ENCODE measurements at regions of chr18 and their contacts with region 1.

Region 1: GRCh38 chr18:29326214-29326613 is 1149.3 kb upstream of the CDH2 start:
- DNase-seq: no peak
- ATAC-seq: no peak
- H3K4me3 ChIP-seq: no peak overlapping the region
- H3K27ac ChIP-seq: no peak overlapping the region
- H3K4me1 ChIP-seq: peaks cover 13% of the 10 kb centered on the region
- H3K27me3 ChIP-seq: no peaks in the 10 kb centered on the region
- CTCF ChIP-seq: no peak

Region 2: DNA sequence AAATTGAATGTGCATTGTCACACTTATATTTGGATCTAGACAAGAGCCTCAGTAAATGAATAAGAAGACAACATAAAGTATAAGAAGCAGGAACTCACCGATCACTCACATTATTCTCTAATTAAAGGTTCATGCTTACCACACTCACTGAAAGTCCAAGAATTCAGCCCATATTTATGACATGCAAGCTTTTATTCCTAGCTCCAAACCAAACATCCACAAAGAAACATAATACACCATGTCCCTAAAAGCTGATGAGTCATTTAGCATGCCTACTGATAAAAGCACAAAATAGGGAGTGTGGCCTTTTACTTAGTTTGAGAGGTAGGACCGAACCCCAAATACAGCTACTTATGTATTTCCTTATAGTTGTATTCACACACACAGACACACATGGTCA is 54.7 kb before region 1 on chr18:
- CTCF ChIA-PET with region 1: no interaction called
- POLR2A ChIA-PET with region 1: no interaction called
- intact Hi-C with region 1: no loop called
- DNase-seq: peak; percentile 29
- ATAC-seq: peak; percentile 45
- H3K4me3 ChIP-seq: no peak overlapping the region
- H3K27ac ChIP-seq: no peak overlapping the region
- H3K4me1 ChIP-seq: peaks cover 5% of the 10 kb centered on the region; the same call in 1 of the 2 replicates
- H3K27me3 ChIP-seq: no peaks in the 10 kb centered on the region
- CTCF ChIP-seq: no peak

Region 3: GRCh38 chr18:29361853-29362252 is 35.6 kb after region 1 on chr18:
- CTCF ChIA-PET with region 1: interaction called, 10 read pairs
- POLR2A ChIA-PET with region 1: no interaction called
- intact Hi-C with region 1: no loop called
- DNase-seq: no peak
- ATAC-seq: no peak
- H3K4me3 ChIP-seq: no peak overlapping the region
- H3K27ac ChIP-seq: no peak overlapping the region
- H3K4me1 ChIP-seq: 0 out of 2 replicates have a peak, but pooled peaks cover 3% of the 10 kb centered on the region
- H3K27me3 ChIP-seq: no peaks in the 10 kb centered on the region
- CTCF ChIP-seq: no peak

Measured in PC-3 (cell line).